ENCODE measurements at regions of chr15 and their contacts with region 1.

Region 1: GRCh38 chr15:70679919-70680231 is 83.5 kb downstream of the UACA start:
- DNase-seq: no peak
- ATAC-seq: no peak
- H3K4me3 Mint-ChIP-seq: no peak overlapping the region
- H3K27ac Mint-ChIP-seq: no peak overlapping the region
- H3K4me1 Mint-ChIP-seq: peaks cover 8% of the 10 kb centered on the region
- H3K27me3 Mint-ChIP-seq: peaks cover 36% of the 10 kb centered on the region

Region 2: GRCh38 chr15:70690491-70691257 is 10.8 kb after region 1 on chr15:
- CTCF ChIA-PET with region 1: interaction called, 11 read pairs
- POLR2A ChIA-PET with region 1: no interaction called
- DNase-seq: no peak
- ATAC-seq: no peak
- H3K4me3 Mint-ChIP-seq: no peak overlapping the region
- H3K27ac Mint-ChIP-seq: no peak overlapping the region
- H3K4me1 Mint-ChIP-seq: no peaks in the 10 kb centered on the region
- H3K27me3 Mint-ChIP-seq: peaks cover 18% of the 10 kb centered on the region

Region 3: GRCh38 chr15:70703096-70703878 is 23.4 kb after region 1 on chr15:
- CTCF ChIA-PET with region 1: no interaction called
- POLR2A ChIA-PET with region 1: no interaction called
- DNase-seq: no peak
- ATAC-seq: no peak
- H3K4me3 Mint-ChIP-seq: no peak overlapping the region
- H3K27ac Mint-ChIP-seq: no peak overlapping the region
- H3K4me1 Mint-ChIP-seq: no peaks in the 10 kb centered on the region
- H3K27me3 Mint-ChIP-seq: peaks cover 48% of the 10 kb centered on the region